ENCODE measurements at regions of chr2 and their contacts with region 1.

Region 1: GRCh38 chr2:238015705-238016104 is 45.1 kb upstream of the SCLY start:
- DNase-seq: no peak
- ATAC-seq: no peak
- H3K4me3 Mint-ChIP-seq: no peak overlapping the region
- H3K27ac Mint-ChIP-seq: no peak overlapping the region
- H3K4me1 Mint-ChIP-seq: no peaks in the 10 kb centered on the region
- H3K27me3 Mint-ChIP-seq: no peaks in the 10 kb centered on the region
- CTCF ChIP-seq: 0 out of 2 replicates have a peak, but pooled peaks have one; percentile 21

Region 2: DNA sequence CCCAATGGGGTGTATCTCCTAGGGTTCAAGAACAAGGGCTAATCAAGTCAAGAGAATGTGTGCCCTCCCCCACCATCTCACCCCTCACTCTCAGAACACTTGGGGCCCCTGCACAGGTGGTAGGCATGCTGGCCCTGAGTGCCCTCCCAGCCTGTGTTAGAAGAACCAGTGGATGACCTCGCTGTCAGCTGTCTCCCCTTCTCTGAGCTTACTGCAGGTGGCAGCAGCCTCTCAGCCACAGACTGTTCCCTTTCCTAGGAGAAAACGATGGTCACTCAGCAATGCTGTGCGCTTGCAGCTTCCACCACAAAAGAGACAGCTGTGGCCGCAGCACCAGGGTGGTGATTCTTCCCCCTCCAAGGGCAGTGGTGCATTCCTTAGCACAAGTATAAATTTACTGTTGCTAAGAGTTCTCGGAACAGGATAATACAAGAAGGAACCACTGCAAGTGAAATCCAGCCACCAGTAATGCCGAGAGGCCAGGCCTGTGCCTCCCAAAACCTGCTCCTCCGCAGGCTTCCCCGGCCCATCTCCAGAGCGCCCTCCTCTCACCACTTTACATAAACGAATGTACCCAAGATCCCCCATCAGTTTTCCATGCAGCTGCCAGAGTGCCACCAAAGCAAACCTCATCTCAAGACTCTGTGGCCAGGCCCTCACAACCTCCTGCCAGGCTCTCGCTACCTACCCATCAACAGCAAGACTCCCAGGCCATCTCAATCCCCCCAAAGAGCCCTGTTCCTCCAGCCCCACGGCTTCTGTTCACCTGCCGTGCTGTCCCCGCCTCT is 157.2 kb before region 1 on chr2:
- CTCF ChIA-PET with region 1: interaction called, 12 read pairs
- POLR2A ChIA-PET with region 1: no interaction called
- DNase-seq: peak; percentile 71
- ATAC-seq: peak; percentile 86
- H3K4me3 Mint-ChIP-seq: peak overlapping the region; percentile 68
- H3K27ac Mint-ChIP-seq: no peak overlapping the region
- H3K4me1 Mint-ChIP-seq: peaks cover 14% of the 10 kb centered on the region
- H3K27me3 Mint-ChIP-seq: peaks cover 60% of the 10 kb centered on the region
- CTCF ChIP-seq: peak; percentile 44